GM12878 (cell line): ENCODE measurements at regions of chr11 and their contacts with region 1.

Region 1: GRCh38 chr11:9060700-9061111 is 30.7 kb downstream of the SCUBE2 start:
- DNase-seq: peak; percentile 97
- ATAC-seq: peak; percentile 99
- H3K4me3 ChIP-seq: no peak overlapping the region
- H3K27ac ChIP-seq: no peak overlapping the region
- H3K4me1 ChIP-seq: peaks cover 16% of the 10 kb centered on the region
- H3K27me3 ChIP-seq: no peaks in the 10 kb centered on the region
- CTCF ChIP-seq: peak; percentile 41 to 47 (median 46); a peak in 4 of 6 replicates
- EP300 ChIP-seq: peak; percentile 92 to 98
- POLR2A ChIP-seq: no peak
- RAD21 ChIP-seq: no peak; the same call in 1 of the 2 replicates

Region 2: GRCh38 chr11:9078113-9079086 is 17.7 kb after region 1 on chr11:
- CTCF ChIA-PET with region 1: no interaction called
- POLR2A ChIA-PET with region 1: interaction called, 3 read pairs
- RAD21 ChIA-PET with region 1: interaction called, 3 read pairs
- SMC1A ChIA-PET with region 1: interaction called, 22 read pairs
- in situ Hi-C with region 1: no loop called
- intact Hi-C with region 1: no loop called
- DNase-seq: no peak
- ATAC-seq: no peak
- H3K4me3 ChIP-seq: no peak overlapping the region
- H3K27ac ChIP-seq: no peak overlapping the region
- H3K4me1 ChIP-seq: no peaks in the 10 kb centered on the region
- H3K27me3 ChIP-seq: no peaks in the 10 kb centered on the region; a peak in 1 of 4 replicates
- CTCF ChIP-seq: no peak
- EP300 ChIP-seq: no peak
- POLR2A ChIP-seq: no peak
- RAD21 ChIP-seq: no peak